Ascending aorta (tissue), 2 donors: ENCODE measurements at regions of chr4 and their contacts with region 1.

Region 1: GRCh38 chr4:7904952-7905915 is 34.4 kb downstream of the AFAP1 start:
- DNase-seq: peak in 1 of 2 donors; percentile 77
- H3K4me3 ChIP-seq: peak overlapping the region; percentile 28 to 50
- H3K27ac ChIP-seq: peak overlapping the region; percentile 83 to 87
- H3K4me1 ChIP-seq: peaks cover 31 to 76% of the 10 kb centered on the region in 2 donors
- H3K27me3 ChIP-seq: no peaks in the 10 kb centered on the region
- CTCF ChIP-seq: no peak

Region 2: GRCh38 chr4:7313347-7313811 is 591.9 kb before region 1 on chr4:
- intact Hi-C with region 1: no loop called
- DNase-seq: no peak
- H3K4me3 ChIP-seq: no peak overlapping the region
- H3K27ac ChIP-seq: no peak overlapping the region
- H3K4me1 ChIP-seq: no peaks in the 10 kb centered on the region
- H3K27me3 ChIP-seq: no peaks in the 10 kb centered on the region
- CTCF ChIP-seq: no peak

Region 3: DNA sequence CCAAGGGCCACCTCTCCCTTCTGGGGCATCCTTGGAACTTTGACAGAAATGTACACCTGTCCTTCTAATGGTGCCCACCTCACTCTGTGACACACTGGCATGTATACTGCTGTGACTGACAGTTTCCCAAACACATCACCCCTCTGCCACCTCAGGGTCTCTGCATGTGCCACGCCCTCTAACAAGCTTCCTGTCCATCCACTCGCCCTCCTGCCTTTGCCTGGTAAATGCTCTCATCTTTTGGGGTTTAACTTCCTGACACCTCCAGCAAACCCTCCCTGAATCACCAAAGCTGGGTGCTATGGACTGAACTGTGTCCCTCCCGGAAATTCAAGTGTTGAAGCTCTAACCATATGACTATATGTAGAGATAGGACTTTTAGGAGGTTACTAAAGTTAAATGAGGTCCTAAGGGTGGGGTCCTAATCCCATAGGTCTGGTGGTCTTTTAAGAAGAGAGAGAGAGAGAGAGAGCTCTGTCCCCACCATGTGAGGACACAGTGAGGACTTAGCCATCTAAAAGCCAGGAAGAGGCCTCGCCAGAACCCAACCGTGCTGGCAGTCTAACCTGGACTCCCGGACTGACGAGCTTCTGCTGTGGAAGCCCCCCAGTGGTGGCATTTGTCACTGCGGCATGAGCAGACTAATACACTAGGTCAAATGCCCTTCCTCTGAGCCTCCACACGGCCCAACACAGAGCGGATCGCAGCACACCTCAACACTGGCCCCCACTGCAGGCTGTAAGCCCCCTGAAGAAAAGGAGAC is 61.2 kb before region 1 on chr4:
- intact Hi-C with region 1: loop called (anchors 5 kb)
- DNase-seq: peak in 1 of 2 donors; percentile 89
- H3K4me3 ChIP-seq: no peak overlapping the region
- H3K27ac ChIP-seq: peak overlapping the region; percentile 10 to 83
- H3K4me1 ChIP-seq: peaks cover 0 to 30% of the 10 kb centered on the region in 2 donors
- H3K27me3 ChIP-seq: no peaks in the 10 kb centered on the region
- CTCF ChIP-seq: peak; percentile 46 to 54 (median 53)

Region 4: GRCh38 chr4:7876201-7876875 is 28.9 kb before region 1 on chr4:
- intact Hi-C with region 1: loop called (anchors 2 kb)
- DNase-seq: peak in 1 of 2 donors; percentile 68
- H3K4me3 ChIP-seq: peak overlapping the region in 1 of 2 donors; percentile 20
- H3K27ac ChIP-seq: peak overlapping the region; percentile 60 to 70
- H3K4me1 ChIP-seq: peaks cover 6 to 38% of the 10 kb centered on the region in 2 donors
- H3K27me3 ChIP-seq: no peaks in the 10 kb centered on the region
- CTCF ChIP-seq: peak in 1 of 3 experiments; percentile 5

Region 5: GRCh38 chr4:7992846-7993245 is 87.6 kb after region 1 on chr4:
- intact Hi-C with region 1: no loop called
- DNase-seq: no peak
- H3K4me3 ChIP-seq: no peak overlapping the region
- H3K27ac ChIP-seq: no peak overlapping the region
- H3K4me1 ChIP-seq: no peaks in the 10 kb centered on the region
- H3K27me3 ChIP-seq: no peaks in the 10 kb centered on the region
- CTCF ChIP-seq: no peak